Mammary epithelial cell (primary cell): ENCODE measurements at regions of chr12 and their contacts with region 1.

Region 1: DNA sequence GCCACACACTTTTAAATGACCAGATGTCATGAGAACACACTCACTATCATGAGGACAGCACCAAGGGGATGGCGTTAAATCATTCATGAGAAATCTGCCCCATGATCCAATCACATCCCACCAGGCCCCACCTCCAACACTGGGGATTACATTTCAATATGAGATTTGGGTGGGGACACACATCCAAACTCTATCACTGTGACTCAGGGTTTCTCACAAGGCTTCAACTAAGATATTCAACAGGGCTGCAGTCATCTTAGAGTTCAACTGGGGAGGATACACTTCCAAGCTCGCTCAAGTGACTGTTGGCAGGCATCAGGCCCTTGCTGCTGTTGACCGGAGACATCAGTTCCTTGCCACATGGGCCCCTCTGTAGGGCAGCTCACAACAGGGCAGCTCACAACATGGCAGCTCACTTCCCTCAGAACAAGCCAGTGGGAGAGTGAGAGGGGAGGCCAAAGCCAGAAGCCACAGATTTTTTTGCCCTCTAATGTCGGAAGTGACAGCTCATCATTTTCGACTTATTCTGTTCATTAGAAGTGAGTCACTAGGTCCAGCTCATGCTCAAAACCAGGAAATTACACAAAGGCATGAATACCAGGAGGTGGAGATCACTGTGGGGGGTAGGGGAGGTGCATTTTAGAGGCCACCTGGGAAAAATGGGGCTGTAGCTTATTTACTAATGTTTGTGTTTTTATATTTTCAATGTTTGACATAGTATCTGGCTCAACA is 50.8 kb upstream of the PTHLH start:
- DNase-seq: peak; percentile 97
- H3K4me3 ChIP-seq: no peak overlapping the region
- H3K27ac ChIP-seq: peak overlapping the region; percentile 100
- H3K4me1 ChIP-seq: peaks cover 64% of the 10 kb centered on the region
- H3K27me3 ChIP-seq: no peaks in the 10 kb centered on the region
- CTCF ChIP-seq: no peak

Region 2: DNA sequence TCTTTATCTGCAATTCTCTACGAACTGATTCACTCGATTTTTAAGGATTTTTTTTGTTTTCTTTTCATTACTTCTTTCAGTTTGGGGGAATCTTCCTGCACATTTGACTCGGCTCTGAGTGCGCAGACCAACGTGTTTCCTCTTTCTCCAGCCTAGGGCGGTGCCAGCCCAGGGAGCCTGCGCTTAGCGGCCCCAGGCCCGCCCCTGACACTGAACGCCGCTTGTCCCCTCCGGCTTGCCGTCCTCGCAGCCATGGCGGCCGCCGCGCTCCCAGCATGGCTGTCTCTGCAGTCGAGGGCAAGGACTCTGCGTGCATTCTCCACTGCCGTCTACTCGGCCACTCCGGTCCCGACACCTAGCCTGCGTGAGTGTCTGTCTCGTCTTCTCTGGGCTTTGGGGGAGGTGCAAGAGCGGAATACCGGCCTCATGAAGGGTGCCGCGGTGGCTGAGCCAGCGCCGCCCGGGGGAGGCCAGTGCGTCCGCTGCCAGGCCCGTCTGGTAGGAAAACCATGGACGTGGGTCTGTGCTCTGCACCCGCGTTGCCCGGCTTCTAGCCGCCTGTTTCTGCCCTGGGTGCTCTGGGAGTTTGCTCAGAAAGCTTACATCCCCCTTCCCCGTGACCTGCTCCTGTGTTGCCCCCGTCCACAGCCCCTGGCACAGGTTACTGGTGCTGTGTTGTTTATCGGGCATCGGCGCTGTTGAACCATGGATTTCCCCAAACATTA is 312.6 kb before region 1 on chr12 and contains the start of gene MRPS35:
- CTCF ChIA-PET with region 1: no interaction called
- dilution Hi-C with region 1: no loop called
- in situ Hi-C with region 1: no loop called
- intact Hi-C with region 1: loop called (anchors 10 kb)
- DNase-seq: peak; percentile 91
- H3K4me3 ChIP-seq: peak within 1 kb of the TSS; percentile 79 to 91 (median 89)
- H3K27ac ChIP-seq: peak within 1 kb of the TSS; percentile 83
- H3K4me1 ChIP-seq: peaks cover 5% of the 10 kb centered on the region
- H3K27me3 ChIP-seq: no peaks in the 10 kb centered on the region
- CTCF ChIP-seq: no peak
- total RNA-seq, gene MRPS35: 33.5 to 36.9 TPM

Region 3: DNA sequence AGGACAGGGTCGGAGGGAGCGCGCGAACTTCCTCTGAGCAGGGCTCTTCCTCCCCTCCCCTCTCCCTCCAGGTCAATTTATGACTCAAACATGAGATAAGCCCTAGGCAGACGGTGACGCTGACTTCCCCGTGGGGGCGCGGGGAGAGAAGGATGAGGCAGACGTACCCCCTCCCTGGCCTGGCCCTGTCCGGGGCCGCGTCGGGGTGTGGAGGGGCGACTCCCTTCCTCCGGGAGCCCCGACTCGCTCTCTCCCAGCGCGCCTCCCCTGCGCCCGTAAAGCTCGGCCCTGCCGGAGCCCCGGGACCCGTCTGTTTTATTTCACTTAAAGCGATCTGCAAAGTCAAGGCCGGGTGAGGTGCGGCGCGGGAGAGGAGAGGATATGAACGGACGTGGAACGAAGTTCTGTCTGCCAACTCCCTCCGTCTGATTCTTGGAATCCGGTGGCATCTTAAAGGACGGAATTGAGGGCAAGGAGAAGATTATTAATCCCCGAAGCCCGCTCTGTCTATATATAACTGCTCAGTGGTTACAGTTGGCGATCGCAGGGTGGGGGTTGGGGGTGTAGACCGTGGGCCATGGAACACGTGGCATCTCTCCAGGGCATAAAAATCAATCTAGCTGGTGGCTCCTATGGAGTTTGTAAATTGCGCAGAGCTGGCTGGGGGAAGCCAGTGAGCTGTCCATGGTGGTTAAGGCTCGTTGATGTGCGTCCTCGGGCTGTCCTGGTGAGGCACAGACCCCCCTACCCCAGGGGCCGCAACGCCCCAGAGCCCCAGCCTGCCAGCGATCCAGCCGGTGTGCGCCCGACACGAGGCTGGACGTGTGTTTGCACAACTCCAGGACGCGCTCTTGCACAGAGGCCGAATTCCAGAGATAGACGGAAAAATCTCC is 47.8 kb before region 1 on chr12:
- CTCF ChIA-PET with region 1: no interaction called
- dilution Hi-C with region 1: loop called (anchors 5 kb)
- in situ Hi-C with region 1: loop called in 1 of 2 experiments (anchors 5 kb)
- intact Hi-C with region 1: no loop called
- DNase-seq: no peak
- H3K4me3 ChIP-seq: no peak overlapping the region
- H3K27ac ChIP-seq: no peak overlapping the region
- H3K4me1 ChIP-seq: peaks cover 27% of the 10 kb centered on the region
- H3K27me3 ChIP-seq: no peaks in the 10 kb centered on the region
- CTCF ChIP-seq: no peak

Region 4: DNA sequence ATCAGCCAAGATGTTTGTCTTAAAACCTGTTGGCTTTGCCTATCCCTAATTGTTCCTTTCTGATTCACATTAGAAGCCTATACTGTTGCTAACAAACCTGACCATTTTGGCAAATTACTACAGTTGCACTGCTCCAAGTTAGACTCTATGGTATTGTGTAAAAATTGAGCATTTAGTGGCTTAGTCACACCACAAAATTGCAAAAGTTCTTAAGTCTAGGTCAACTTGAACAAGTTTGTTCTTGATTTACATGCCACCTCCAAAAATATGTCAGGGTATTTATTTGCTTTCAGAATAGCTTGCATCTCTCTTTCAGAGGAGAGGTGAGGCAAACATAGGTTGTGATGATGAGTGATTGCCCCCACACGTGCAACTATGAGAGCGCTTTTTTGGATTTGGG is 23.8 kb before region 1 on chr12:
- CTCF ChIA-PET with region 1: no interaction called
- dilution Hi-C with region 1: no loop called
- in situ Hi-C with region 1: no loop called
- intact Hi-C with region 1: loop called (anchors 2 kb)
- DNase-seq: peak; percentile 97
- H3K4me3 ChIP-seq: no peak overlapping the region
- H3K27ac ChIP-seq: peak overlapping the region; percentile 92
- H3K4me1 ChIP-seq: peaks cover 24% of the 10 kb centered on the region
- H3K27me3 ChIP-seq: no peaks in the 10 kb centered on the region
- CTCF ChIP-seq: no peak

Region 5: GRCh38 chr12:28057856-28058615 is 34.7 kb after region 1 on chr12:
- CTCF ChIA-PET with region 1: no interaction called
- dilution Hi-C with region 1: no loop called
- in situ Hi-C with region 1: no loop called
- intact Hi-C with region 1: loop called (anchors 2 kb)
- DNase-seq: peak; percentile 99
- H3K4me3 ChIP-seq: no peak overlapping the region
- H3K27ac ChIP-seq: peak overlapping the region; percentile 88
- H3K4me1 ChIP-seq: peaks cover 18% of the 10 kb centered on the region
- H3K27me3 ChIP-seq: no peaks in the 10 kb centered on the region
- CTCF ChIP-seq: no peak

Region 6: DNA sequence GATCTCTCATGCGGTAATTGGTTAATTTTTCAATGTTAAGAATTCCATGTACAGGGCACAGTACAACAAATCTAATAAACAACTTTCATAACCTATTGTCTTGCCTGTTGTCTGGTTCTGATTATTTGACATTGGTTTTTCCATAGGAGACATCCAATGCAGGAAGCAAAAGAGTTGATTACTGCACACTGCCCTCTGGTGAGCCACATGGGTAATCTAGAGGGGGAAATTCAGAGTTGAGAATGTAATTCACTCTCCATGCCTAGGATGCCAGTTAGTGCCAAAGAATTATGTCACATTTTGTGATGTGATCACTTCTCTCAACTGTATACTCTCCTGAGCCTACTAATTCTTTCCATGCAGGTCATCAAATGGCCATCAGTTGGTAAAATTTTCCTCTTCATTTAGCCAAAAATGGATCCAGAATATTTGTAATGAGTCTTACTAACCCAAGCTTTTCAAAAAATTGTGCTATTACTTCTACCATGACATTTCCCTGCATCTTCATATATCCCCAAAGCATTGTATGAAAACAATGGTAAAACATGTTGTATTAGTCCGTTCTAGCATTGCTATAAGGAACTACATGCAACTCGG is 149.2 kb after region 1 on chr12:
- CTCF ChIA-PET with region 1: interaction called, 4 read pairs
- dilution Hi-C with region 1: no loop called
- in situ Hi-C with region 1: no loop called
- intact Hi-C with region 1: loop called (anchors 2 kb)
- DNase-seq: peak; percentile 63
- H3K4me3 ChIP-seq: no peak overlapping the region
- H3K27ac ChIP-seq: peak overlapping the region; percentile 23
- H3K4me1 ChIP-seq: peaks cover 12% of the 10 kb centered on the region
- H3K27me3 ChIP-seq: no peaks in the 10 kb centered on the region
- CTCF ChIP-seq: peak; percentile 80 to 85

Region 7: GRCh38 chr12:28872654-28873268 is 849.4 kb after region 1 on chr12:
- CTCF ChIA-PET with region 1: no interaction called
- dilution Hi-C with region 1: no loop called
- in situ Hi-C with region 1: no loop called
- intact Hi-C with region 1: loop called (anchors 5 kb)
- DNase-seq: peak; percentile 78
- H3K4me3 ChIP-seq: no peak overlapping the region
- H3K27ac ChIP-seq: no peak overlapping the region
- H3K4me1 ChIP-seq: peaks cover 39% of the 10 kb centered on the region
- H3K27me3 ChIP-seq: no peaks in the 10 kb centered on the region
- CTCF ChIP-seq: peak; percentile 87 to 88